B cell (primary cell): ENCODE measurements at regions of chr14 and their contacts with region 1.

Region 1: DNA sequence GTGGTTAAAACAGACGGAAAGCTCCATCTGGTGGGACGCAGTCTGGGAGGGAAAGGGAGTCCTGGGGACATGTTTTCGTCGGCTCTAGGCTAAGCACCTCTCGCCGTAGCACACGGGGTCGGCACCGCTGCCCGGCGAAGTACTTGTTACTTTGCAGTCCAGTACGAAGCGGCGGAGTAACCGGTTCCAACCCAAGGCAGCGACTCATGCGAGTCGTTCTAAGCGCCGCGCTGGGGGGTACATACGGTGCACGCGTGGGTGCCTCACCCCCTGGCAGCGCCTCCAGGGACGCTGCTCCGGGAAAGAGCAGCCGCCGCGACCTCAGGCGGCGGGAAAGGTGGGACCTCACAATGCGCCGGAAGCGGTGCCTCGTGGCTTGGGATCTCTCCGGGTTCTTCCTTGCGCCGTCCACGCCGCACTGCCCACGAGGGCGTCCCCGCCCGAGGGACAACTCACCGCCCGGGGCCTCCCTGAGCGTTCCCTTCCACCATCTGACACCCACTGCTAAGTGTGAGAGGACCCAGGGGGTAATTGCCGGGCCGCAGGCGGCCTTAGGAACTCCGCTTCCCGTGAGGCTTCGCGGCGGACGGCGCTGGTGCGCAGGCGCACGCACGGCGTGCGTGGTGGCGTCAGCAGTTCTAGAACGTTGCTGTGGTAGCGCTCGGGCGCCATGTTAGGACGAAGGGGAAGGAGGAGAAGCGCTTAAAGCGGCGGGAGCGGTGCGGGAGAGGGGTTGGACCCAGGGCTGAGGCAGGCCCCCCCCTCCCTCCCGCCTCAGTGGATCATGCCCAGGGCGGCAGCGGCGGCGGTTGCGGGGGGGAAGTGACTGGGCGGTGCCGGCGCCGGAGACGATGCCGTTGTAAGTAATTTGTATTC is at the start of gene PAPOLA:
- DNase-seq: peak; percentile 98
- ATAC-seq: peak; percentile 86
- H3K4me3 ChIP-seq: peak within 1 kb of the TSS; percentile 80 to 94 (median 88)
- H3K4me3 Mint-ChIP-seq: peak within 1 kb of the TSS; percentile 100
- H3K27ac ChIP-seq: peak within 1 kb of the TSS; percentile 94 to 98
- H3K27ac Mint-ChIP-seq: peak within 1 kb of the TSS; percentile 99
- H3K4me1 ChIP-seq: peaks cover 50 to 53% of the 10 kb centered on the region in 2 donors
- H3K4me1 Mint-ChIP-seq: peaks cover 70% of the 10 kb centered on the region
- H3K27me3 ChIP-seq: no peaks in the 10 kb centered on the region
- H3K27me3 Mint-ChIP-seq: no peaks in the 10 kb centered on the region
- CTCF ChIP-seq: no peak
- total RNA-seq, gene PAPOLA: 323 and 324 TPM in 2 replicates

Region 2: DNA sequence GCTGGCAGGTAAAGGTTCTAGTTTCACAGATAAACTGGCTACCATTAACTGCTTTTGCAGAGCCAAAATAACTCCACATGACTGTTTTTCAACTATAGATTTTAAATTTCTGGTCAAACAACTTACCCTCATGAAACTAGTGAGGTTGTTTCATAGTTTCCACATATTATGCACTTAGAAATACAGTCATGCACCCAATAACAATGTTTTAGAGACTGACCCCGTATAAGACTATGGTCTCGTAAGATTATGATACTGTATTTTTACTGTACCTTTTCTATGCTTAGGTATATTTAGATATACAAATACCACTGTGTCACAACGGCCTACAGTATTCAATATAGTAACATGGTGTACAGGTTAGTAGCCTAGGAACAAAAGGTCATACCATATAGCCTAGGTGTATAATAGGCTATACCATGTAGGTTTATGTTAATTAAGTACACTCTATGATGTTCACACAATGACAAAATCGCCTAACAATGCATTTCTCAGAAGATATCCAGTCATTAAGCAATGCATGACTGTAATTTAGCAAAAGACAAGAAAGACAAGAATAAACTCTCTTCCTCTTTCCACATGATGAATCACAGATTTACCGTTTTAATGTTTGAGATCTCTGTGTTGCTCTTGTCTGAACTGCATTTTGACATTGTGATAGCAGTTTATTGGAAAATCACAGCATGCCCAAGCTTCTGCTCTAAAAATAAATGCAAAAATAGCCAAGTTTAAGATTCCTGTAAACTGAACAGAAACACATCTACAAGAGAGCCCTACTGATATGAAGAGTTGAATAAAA is 1361.7 kb before region 1 on chr14:
- CTCF ChIA-PET with region 1: no interaction called
- POLR2A ChIA-PET with region 1: no interaction called
- intact Hi-C with region 1: loop called (anchors 10 kb)
- DNase-seq: peak; percentile 22
- ATAC-seq: peak; percentile 61
- H3K4me3 ChIP-seq: peak overlapping the region in 1 of 5 experiments; percentile 22
- H3K4me3 Mint-ChIP-seq: peak overlapping the region; percentile 44
- H3K27ac ChIP-seq: peak overlapping the region in 1 of 2 donors; percentile 82
- H3K27ac Mint-ChIP-seq: peak overlapping the region; percentile 68
- H3K4me1 ChIP-seq: peaks cover 26 to 40% of the 10 kb centered on the region in 2 donors
- H3K4me1 Mint-ChIP-seq: peaks cover 74% of the 10 kb centered on the region
- H3K27me3 ChIP-seq: no peaks in the 10 kb centered on the region
- H3K27me3 Mint-ChIP-seq: no peaks in the 10 kb centered on the region
- CTCF ChIP-seq: no peak

Region 3: DNA sequence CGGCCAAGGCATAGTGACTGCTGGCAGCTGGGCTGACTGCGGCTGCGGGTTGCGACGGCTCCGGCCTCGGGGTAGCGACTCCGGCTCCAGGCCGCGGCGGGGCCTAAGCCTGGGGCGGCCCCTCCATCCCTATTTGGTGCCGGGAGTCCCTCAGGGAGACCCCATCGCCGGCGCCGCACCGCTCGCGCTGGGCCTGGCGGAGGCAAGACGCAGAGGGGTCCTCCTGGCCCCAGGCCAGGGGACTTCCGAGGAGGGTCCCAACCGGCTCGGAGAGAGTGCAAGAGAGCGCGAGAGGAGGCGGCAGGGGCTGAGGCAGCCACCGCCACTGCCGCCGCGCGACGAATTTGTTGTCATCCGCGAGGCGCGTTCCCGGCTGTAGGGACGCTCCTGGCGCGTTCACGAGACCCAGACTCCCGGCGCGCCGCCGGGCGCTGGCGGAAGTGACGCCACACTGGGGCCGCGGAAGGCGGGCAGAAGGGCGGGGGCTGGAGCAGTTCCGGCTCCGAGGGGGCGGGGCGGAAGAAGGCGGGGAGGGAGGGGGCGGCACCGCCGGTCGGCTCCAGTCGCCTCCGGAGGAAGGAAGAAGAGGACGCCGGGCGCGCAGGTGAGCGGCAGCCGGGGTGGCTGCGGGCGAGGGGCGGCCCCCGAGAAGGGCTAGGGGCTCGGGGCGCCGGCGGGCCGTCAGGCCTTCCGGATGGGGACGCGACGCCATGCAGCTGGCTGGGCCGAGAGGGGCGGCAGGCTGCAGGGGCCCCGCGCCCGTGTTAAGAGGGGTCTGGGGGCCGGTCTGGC is 138.8 kb before region 1 on chr14 and contains the starts of genes ATG2B and GSKIP:
- CTCF ChIA-PET with region 1: no interaction called
- POLR2A ChIA-PET with region 1: no interaction called
- intact Hi-C with region 1: loop called (anchors 1 kb)
- DNase-seq: peak; percentile 97
- ATAC-seq: peak; percentile 80
- H3K4me3 ChIP-seq: peak within 1 kb of the TSS; percentile 75 to 97 (median 91)
- H3K4me3 Mint-ChIP-seq: peak within 1 kb of the TSS; percentile 89
- H3K27ac ChIP-seq: peak within 1 kb of the TSS; percentile 77 to 98
- H3K27ac Mint-ChIP-seq: peak within 1 kb of the TSS; percentile 91
- H3K4me1 ChIP-seq: peaks cover 25 to 28% of the 10 kb centered on the region in 2 donors
- H3K4me1 Mint-ChIP-seq: peaks cover 44% of the 10 kb centered on the region
- H3K27me3 ChIP-seq: no peaks in the 10 kb centered on the region
- H3K27me3 Mint-ChIP-seq: no peaks in the 10 kb centered on the region
- CTCF ChIP-seq: no peak
- total RNA-seq, gene ATG2B: 37.5 and 39.6 TPM in 2 replicates
- total RNA-seq, gene GSKIP: 14.9 and 15.8 TPM in 2 replicates

Region 4: DNA sequence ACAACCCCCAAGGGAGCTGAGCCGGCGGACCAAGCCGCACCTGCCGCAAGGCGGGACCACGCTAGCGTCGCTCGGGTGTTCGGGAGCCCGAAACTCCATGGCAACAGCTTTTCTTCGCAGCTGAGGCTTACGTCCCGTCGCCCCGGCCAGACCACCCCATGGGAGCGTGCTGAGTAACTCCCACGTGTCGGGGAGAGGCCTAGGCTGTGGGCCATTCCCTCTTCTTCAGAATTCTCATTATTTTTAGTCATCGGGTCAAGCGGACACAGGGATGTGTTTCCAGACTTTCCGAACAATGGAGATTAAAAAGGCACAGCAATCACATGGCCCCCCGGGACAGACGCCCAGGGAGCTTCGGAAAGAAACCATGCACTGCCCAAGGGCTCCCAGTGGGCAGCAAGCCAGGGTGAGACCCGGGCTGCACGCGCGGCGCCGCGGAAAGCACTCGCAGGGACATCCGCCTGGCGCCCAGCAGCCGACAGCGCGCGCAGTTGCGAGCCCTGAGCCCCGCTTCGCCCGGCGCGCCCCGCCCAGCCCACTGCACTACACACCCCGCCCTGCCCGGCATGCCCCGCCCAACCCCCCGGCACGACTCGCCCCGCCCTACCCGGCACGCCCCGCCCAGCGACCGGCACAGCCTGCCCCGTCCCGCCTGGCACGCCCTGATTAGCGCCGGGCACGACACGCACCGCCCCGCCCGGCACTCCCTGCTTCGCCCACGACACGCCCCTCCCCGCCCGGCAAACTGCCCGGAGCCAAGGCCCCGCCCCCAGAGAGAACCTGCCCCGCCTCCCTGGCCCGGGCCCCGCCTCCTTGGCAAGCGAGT is 110.5 kb before region 1 on chr14:
- CTCF ChIA-PET with region 1: no interaction called
- POLR2A ChIA-PET with region 1: no interaction called
- intact Hi-C with region 1: loop called (anchors 1 kb)
- DNase-seq: peak; percentile 98
- ATAC-seq: peak; percentile 94
- H3K4me3 ChIP-seq: peak overlapping the region; percentile 68 to 96 (median 77)
- H3K4me3 Mint-ChIP-seq: peak overlapping the region; percentile 93
- H3K27ac ChIP-seq: peak overlapping the region; percentile 45 to 74
- H3K27ac Mint-ChIP-seq: peak overlapping the region; percentile 79
- H3K4me1 ChIP-seq: peaks cover 7 to 18% of the 10 kb centered on the region in 2 donors
- H3K4me1 Mint-ChIP-seq: peaks cover 8% of the 10 kb centered on the region
- H3K27me3 ChIP-seq: no peaks in the 10 kb centered on the region
- H3K27me3 Mint-ChIP-seq: peaks cover 5% of the 10 kb centered on the region
- CTCF ChIP-seq: no peak

Region 5: DNA sequence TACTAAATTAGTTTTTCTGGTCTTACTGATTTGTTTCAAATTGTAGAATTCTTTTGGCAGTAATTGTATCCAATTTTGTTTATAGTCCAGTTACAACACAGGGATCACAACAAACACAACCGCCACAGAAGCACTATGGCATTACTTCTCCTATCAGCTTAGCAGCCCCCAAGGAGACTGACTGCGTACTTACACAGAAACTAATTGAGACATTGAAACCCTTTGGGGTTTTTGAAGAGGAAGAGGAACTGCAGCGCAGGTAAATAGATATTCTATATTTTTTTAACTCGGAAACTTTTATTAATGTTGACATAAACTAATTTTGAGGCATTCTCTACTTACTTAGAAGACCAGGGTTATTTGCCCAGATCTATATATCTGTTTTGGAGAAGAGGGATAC is 18.0 kb after region 1 on chr14:
- CTCF ChIA-PET with region 1: interaction called, 4 read pairs
- POLR2A ChIA-PET with region 1: interaction called, 3 read pairs
- intact Hi-C with region 1: loop called (anchors 2 kb)
- DNase-seq: peak; percentile 63
- ATAC-seq: peak; percentile 81
- H3K4me3 ChIP-seq: no peak overlapping the region
- H3K4me3 Mint-ChIP-seq: peak overlapping the region; percentile 58
- H3K27ac ChIP-seq: peak overlapping the region; percentile 37 to 70
- H3K27ac Mint-ChIP-seq: peak overlapping the region; percentile 65
- H3K4me1 ChIP-seq: peaks cover 44 to 46% of the 10 kb centered on the region in 2 donors
- H3K4me1 Mint-ChIP-seq: peaks cover 46% of the 10 kb centered on the region
- H3K27me3 ChIP-seq: no peaks in the 10 kb centered on the region
- H3K27me3 Mint-ChIP-seq: no peaks in the 10 kb centered on the region
- CTCF ChIP-seq: no peak

Region 6: GRCh38 chr14:96796851-96797581 is 295.0 kb after region 1 on chr14 and contains the start of gene VRK1:
- CTCF ChIA-PET with region 1: no interaction called
- POLR2A ChIA-PET with region 1: no interaction called
- intact Hi-C with region 1: loop called (anchors 5 kb)
- DNase-seq: peak; percentile 95
- ATAC-seq: peak; percentile 99
- H3K4me3 ChIP-seq: peak within 1 kb of the TSS; percentile 62 to 95 (median 80)
- H3K4me3 Mint-ChIP-seq: peak within 1 kb of the TSS; percentile 90
- H3K27ac ChIP-seq: peak within 1 kb of the TSS; percentile 80 to 82
- H3K27ac Mint-ChIP-seq: peak within 1 kb of the TSS; percentile 91
- H3K4me1 ChIP-seq: peaks cover 11% of the 10 kb centered on the region in 2 donors
- H3K4me1 Mint-ChIP-seq: peaks cover 20% of the 10 kb centered on the region
- H3K27me3 ChIP-seq: peaks cover 0 to 9% (median 2%) of the 10 kb centered on the region in 4 experiments
- H3K27me3 Mint-ChIP-seq: peaks cover 11% of the 10 kb centered on the region
- CTCF ChIP-seq: no peak
- total RNA-seq, gene VRK1: 28.2 and 35.3 TPM in 2 replicates